ENCODE measurements at regions of chr9 and their contacts with region 1.

Region 1: GRCh38 chr9:86282077-86282978 is at the start of gene ISCA1:
- DNase-seq: peak; percentile 95 to 99 (median 98)

Region 2: GRCh38 chr9:85971731-85972130 is 310.6 kb before region 1 on chr9:
- intact Hi-C with region 1: no loop called
- DNase-seq: no peak

Region 3: DNA sequence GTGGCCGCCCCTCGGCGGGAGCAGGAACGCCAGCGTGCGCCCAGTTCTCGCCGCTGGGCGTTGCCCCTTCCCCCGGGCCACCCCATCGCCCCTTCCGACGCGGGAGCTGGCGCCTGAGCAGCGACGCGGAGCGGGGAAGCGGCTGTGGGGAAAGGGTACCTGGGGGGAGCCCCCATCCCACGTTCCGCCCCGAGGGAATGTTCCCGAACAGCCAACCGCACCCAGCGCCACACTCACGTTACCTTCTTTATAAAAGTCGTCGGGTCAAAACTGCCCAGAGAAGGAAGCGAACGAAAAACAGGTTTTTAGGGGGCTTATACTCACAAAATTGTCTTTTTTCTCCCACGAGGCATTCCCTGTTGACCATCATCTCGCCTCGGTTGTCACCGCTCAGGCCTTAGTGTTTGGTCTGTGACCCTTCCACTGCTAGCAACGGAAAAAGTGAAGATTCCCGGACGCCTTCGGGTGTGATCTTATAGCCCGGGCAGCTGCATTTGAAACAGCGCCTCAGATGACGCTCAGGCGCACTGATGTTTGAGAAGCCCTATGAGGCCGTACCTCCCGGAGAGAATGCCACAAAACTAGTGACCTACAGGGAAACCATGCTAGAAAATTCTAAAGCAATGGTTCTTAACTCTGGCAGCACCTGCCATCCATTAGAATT is 182.5 kb before region 1 on chr9:
- intact Hi-C with region 1: no loop called
- DNase-seq: peak in 1 of 10 donors; percentile 13

Region 4: GRCh38 chr9:86222667-86223066 is 59.7 kb before region 1 on chr9:
- intact Hi-C with region 1: no loop called
- DNase-seq: no peak

Region 5: DNA sequence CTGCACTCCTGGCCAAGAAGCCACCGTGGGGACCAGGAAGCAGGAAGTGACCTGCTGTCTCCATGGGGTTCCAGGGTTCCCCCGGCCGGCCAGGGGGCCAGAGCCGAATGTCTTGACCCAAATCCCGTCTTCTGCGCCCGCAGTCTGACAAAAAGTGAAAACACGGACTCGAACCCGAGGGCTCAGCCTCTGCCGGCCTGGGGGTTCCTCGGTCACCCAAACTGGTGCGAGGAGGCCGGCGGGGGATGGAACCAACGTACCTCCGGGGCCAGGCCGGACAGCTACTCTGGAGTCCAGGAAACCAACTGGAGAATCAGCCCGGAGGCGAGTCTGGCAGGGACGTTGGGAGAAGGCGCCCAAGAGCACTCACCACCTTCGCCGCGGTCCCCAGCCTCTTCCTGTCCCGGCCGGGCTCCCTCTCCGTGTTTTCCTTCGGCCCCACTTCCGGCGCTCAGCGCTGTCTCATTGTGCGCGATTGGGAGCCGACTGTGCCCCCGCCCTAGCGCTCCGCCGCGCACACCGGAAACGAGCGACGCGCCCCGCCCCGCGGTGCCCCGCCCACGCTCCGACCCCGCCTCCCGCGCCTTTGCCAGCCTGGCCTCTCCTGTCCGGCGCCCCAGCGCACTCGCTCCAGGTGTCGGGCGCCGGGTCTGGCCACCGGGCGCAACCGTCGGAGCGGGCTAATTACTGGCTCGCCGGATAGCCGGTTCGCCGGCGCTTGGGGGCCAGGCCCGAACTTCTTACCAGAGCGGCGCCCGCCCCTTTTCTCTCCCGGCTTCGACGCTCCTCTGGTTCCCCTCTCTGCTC is 71.9 kb after region 1 on chr9 and contains the start of gene TUT7:
- intact Hi-C with region 1: loop called (anchors 5 kb)
- DNase-seq: peak; percentile 92 to 99 (median 96)